Ascending aorta (tissue), 2 donors: ENCODE measurements at regions of chr11 and their contacts with region 1.

Region 1: DNA sequence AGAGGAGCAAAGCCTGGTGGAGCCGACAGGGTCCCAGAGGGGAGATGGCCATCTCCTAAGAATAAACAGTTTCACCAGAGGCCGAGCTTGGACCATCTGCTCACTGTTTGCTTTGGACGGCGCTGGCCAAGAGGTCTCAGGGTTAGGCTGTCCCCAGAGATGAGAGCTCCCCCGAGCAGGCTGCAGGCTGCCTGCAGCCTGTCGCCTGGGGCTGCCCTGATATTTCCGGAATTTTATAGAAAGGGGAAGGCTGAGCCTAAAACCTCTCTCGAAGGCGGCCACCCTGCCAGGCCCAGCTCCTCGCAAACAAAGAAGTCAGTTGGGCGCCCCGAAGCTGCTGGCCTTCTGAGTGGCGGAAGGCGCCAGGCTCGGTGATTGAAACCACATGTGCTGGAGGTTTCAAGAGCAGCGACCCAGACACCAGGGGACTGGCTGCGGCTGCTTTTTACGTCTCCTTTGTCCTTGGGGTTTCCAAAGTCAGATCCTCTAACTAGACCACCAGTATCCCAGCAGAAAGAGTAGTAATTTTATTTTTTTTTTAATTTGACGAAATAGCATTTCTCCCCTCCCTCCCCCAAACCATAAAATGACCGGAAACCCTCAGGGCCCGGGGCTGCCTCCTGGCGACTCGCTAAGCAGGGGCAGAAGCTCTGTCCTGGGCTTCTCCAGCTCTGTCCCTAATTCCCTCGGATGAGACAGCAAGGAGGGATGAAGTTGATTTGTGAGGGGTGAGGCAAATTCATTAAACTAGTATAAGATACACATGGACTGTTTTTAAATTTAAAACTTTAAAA is 57.4 kb downstream of the CLMP start:
- DNase-seq: peak; percentile 42 to 94
- H3K4me3 ChIP-seq: peak overlapping the region; percentile 29 to 56
- H3K27ac ChIP-seq: peak overlapping the region in 1 of 2 donors; percentile 87
- H3K4me1 ChIP-seq: peaks cover 3 to 41% of the 10 kb centered on the region in 2 donors
- H3K27me3 ChIP-seq: no peaks in the 10 kb centered on the region
- CTCF ChIP-seq: peak in 1 of 3 experiments; percentile 16

Region 2: DNA sequence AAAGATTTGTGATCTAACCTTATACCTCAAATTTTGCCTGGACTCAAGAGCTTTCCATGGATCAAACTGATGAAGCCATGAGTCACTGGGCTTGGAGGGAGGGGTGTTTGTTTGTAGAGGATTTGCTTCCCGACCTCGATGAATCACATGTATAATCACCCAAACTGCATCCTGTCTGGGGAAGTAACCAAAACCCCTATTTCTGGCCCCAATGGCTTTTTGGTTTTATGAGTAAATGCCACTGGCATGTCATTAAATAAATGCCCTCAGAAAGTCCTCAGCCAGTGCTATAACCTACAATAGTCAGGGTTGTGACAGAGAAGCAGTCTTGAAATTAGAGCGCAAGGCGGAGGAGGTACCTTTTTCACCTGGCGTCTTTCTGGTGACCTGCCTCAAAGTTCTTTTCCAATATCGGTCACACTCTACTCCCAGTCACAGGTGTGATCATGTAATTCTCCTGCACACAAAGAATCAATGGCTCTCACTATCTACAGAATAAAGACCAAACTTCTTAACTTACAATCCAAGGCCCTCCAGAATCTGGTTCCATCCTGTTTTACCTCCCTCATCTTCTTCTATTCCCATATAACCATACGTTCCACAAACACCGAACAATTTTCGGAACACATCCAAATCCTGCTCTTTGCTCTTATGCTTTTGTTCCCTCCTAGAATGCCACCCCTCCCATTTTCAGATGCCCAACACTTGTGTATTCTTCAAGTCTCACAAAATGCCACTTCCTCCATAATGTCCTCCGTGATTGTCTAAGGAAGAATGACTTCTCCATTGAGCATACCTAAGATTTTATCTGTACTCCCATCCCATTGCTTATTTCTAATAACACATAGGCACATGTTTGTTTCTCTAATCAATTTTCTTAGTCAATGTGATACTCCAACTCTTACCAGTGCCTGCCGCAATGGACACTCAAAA is 940.3 kb before region 1 on chr11:
- intact Hi-C with region 1: loop called (anchors 10 kb)
- DNase-seq: peak; percentile 57 to 95
- H3K4me3 ChIP-seq: peak overlapping the region in 1 of 2 donors; percentile 9
- H3K27ac ChIP-seq: peak overlapping the region; percentile 89 to 92
- H3K4me1 ChIP-seq: peaks cover 4 to 66% of the 10 kb centered on the region in 2 donors
- H3K27me3 ChIP-seq: no peaks in the 10 kb centered on the region
- CTCF ChIP-seq: no peak

Region 3: DNA sequence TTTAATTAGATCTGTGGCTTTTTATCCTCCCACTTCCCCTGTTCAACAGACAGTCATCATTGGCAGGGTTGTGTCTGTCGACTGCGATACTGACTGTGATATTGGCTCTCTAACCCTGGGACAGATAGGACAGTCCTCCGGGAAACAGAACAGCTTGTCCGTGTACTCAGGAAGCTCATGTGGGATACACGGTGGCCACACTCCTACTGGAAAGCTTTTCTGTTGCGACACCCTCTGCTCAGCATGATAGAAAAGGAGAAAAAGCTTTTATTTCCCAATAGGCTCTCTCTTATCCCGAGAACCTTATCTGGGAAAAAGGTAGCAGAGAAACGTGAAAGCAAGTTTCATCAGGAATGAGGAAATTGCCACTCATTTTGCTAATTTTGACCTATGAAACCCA is 15.3 kb before region 1 on chr11:
- intact Hi-C with region 1: loop called (anchors 2 kb)
- DNase-seq: peak in 1 of 2 donors; percentile 89
- H3K4me3 ChIP-seq: peak overlapping the region in 1 of 2 donors; percentile 4
- H3K27ac ChIP-seq: peak overlapping the region; percentile 89 to 91
- H3K4me1 ChIP-seq: peaks cover 3 to 31% of the 10 kb centered on the region in 2 donors
- H3K27me3 ChIP-seq: no peaks in the 10 kb centered on the region
- CTCF ChIP-seq: no peak